CD8-positive, alpha-beta T cell (primary cell): ENCODE measurements at regions of chr6 and their contacts with region 1.

Region 1: DNA sequence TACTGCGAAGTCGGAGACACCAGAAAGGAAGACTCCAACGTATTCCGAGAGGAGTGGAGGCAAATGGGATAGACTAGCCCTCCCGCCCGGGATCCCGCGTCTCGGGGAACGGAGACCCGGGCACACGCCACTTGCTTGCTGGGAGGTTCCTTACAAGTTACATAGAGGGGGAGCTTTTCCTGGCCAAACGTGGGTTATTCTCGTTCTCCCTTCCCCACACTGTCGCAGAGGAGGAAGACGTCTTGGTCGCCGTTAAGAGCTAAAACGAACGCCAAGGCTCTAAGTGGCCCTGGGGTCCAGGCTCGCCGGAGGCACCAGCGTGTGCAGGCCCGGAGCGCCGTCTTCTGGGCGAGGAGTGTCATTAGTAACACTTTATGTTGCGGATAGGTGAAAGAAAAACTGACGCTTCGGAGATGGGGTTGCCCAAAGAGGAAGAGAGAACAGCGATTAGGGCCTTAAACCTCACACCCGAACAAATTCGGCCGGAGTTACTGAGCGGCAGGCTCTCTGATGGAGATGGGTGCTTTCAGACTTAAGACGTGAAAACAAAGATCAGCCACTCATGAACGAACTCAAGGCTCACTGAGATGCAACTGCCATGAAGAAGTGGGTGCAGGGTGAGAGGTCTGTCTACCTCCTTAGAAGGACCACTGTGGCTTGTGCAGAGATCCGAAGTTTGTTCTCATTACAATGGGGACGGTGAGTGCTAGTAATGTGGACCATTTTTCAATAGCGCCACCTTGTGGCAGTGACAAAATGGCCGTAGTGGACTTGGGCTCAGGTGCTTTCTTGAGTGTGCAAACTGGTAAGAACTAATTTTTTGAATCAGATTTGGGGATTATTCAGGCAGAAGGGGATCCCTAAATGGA is 11.7 kb upstream of the ZNF311 start:
- DNase-seq: peak; percentile 66 to 90 (median 86)
- ATAC-seq: peak; percentile 78
- H3K4me3 ChIP-seq: peak overlapping the region; percentile 52 to 62
- H3K4me3 Mint-ChIP-seq: peak overlapping the region; percentile 92
- H3K27ac ChIP-seq: no peak overlapping the region
- H3K27ac Mint-ChIP-seq: peak overlapping the region; percentile 87
- H3K4me1 ChIP-seq: peaks cover 5% of the 10 kb centered on the region
- H3K4me1 Mint-ChIP-seq: peaks cover 19% of the 10 kb centered on the region
- H3K27me3 ChIP-seq: peaks cover 0 to 11% of the 10 kb centered on the region in 2 experiments
- H3K27me3 Mint-ChIP-seq: peaks cover 21% of the 10 kb centered on the region
- CTCF ChIP-seq: peak; percentile 79

Region 2: DNA sequence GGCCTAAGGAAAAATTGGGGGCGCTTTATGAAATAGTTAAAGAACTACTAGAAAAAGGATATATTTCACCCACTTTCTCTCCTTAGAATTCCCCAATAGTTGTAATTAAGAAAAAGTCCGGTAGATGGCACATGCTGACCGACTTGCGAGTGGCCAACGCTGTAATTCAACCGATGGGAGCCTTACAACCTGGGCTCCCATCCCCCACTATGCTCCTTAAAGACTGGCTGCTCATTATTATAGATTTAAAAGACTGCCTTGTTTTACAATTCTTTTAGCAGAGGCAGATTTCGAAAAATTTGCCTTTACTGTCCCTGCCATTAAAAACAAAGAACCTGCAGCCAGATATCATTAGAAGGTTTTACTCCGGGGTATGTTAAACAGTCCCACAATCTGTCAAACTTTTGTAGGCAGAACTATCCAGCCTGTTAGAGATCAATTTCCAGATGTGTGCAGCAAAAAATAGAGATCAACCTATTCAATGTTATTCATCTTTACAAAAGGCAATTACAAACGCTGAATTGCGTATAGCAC is 1827.8 kb before region 1 on chr6:
- CTCF ChIA-PET with region 1: no interaction called
- POLR2A ChIA-PET with region 1: no interaction called
- intact Hi-C with region 1: loop called in 1 of 2 experiments (anchors 10 kb)
- DNase-seq: peak in 8 of 9 experiments; percentile 24 to 86 (median 50)
- ATAC-seq: peak; percentile 77
- H3K4me3 ChIP-seq: peak overlapping the region; percentile 58 to 62
- H3K4me3 Mint-ChIP-seq: peak overlapping the region; percentile 87
- H3K27ac ChIP-seq: peak overlapping the region in 1 of 2 experiments; percentile 33
- H3K27ac Mint-ChIP-seq: no peak overlapping the region
- H3K4me1 ChIP-seq: peaks cover 4% of the 10 kb centered on the region
- H3K4me1 Mint-ChIP-seq: peaks cover 10% of the 10 kb centered on the region
- H3K27me3 ChIP-seq: no peaks in the 10 kb centered on the region
- H3K27me3 Mint-ChIP-seq: no peaks in the 10 kb centered on the region
- CTCF ChIP-seq: peak; percentile 66

Region 3: DNA sequence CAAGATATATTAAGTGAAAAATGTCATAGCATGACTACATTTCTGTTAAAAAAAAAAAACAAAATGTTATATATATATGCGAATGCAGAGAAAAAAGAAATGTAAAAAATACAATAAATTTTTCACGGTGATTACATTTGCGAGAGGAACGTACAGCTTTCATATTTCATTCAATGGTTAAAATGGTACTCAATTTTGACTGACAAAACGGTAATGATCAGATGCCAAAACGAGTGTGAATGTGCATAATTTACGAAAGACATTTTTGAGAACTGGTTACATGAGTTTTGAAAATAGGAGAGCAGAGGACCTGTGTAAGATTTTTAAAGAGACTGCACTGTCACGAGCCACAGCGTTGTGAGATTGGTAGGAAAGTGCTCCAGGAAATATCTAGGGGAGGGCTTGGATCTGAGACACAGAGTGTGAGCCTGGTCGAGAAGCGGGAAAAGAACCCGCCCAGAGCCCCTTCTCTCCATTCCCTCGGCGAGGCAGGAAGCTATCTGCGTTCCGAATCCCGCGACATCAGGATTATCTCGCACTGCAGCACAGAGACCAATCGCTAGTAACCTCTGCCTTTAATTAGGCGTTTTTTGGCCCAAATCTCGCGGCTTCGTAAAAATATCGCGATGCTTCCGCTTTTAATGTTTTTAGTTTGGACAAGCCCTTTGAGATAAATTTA is 121.5 kb before region 1 on chr6:
- CTCF ChIA-PET with region 1: interaction called, 3 read pairs
- POLR2A ChIA-PET with region 1: interaction called, 5 read pairs
- intact Hi-C with region 1: loop called in 1 of 2 experiments (anchors 2 kb)
- DNase-seq: peak; percentile 83 to 97 (median 90)
- ATAC-seq: peak; percentile 68
- H3K4me3 ChIP-seq: peak overlapping the region; percentile 79 to 80
- H3K4me3 Mint-ChIP-seq: peak overlapping the region; percentile 98
- H3K27ac ChIP-seq: peak overlapping the region; percentile 95 to 98
- H3K27ac Mint-ChIP-seq: peak overlapping the region; percentile 99
- H3K4me1 ChIP-seq: peaks cover 8% of the 10 kb centered on the region
- H3K4me1 Mint-ChIP-seq: peaks cover 18% of the 10 kb centered on the region
- H3K27me3 ChIP-seq: no peaks in the 10 kb centered on the region
- H3K27me3 Mint-ChIP-seq: no peaks in the 10 kb centered on the region
- CTCF ChIP-seq: no peak

Region 4: DNA sequence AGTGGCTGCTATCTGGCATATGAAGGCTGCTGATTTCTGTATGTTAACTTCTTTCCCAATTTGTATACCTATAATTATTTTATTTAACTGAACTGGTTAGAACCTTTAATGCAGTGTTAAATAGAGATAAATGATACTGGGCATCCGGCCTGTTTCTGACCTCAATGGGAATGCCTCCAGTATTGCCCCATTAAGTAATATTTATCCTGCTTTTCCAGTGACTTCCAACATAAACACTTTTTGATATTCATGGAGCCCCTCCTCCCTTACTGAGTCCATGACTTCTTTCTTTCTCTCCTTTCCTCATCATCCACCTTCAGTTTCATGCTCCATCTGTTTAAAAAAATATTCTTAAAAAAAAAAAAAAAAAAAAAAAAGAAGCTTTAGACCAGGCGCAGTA is 101.9 kb before region 1 on chr6:
- CTCF ChIA-PET with region 1: no interaction called
- POLR2A ChIA-PET with region 1: no interaction called
- intact Hi-C with region 1: no loop called
- DNase-seq: no peak
- ATAC-seq: no peak
- H3K4me3 ChIP-seq: no peak overlapping the region
- H3K4me3 Mint-ChIP-seq: no peak overlapping the region
- H3K27ac ChIP-seq: no peak overlapping the region
- H3K27ac Mint-ChIP-seq: no peak overlapping the region
- H3K4me1 ChIP-seq: peaks cover 3% of the 10 kb centered on the region
- H3K4me1 Mint-ChIP-seq: peaks cover 17% of the 10 kb centered on the region
- H3K27me3 ChIP-seq: no peaks in the 10 kb centered on the region
- H3K27me3 Mint-ChIP-seq: no peaks in the 10 kb centered on the region
- CTCF ChIP-seq: no peak

Region 5: GRCh38 chr6:28940858-28941680 is 75.7 kb before region 1 on chr6:
- CTCF ChIA-PET with region 1: interaction called, 6 read pairs
- POLR2A ChIA-PET with region 1: no interaction called
- intact Hi-C with region 1: loop called (anchors 2 kb)
- DNase-seq: peak in 8 of 9 experiments; percentile 58 to 92 (median 70)
- ATAC-seq: peak; percentile 70
- H3K4me3 ChIP-seq: peak overlapping the region; percentile 66 to 81
- H3K4me3 Mint-ChIP-seq: peak overlapping the region; percentile 91
- H3K27ac ChIP-seq: peak overlapping the region; percentile 70 to 79
- H3K27ac Mint-ChIP-seq: peak overlapping the region; percentile 96
- H3K4me1 ChIP-seq: peaks cover 40% of the 10 kb centered on the region
- H3K4me1 Mint-ChIP-seq: peaks cover 46% of the 10 kb centered on the region
- H3K27me3 ChIP-seq: no peaks in the 10 kb centered on the region
- H3K27me3 Mint-ChIP-seq: no peaks in the 10 kb centered on the region
- CTCF ChIP-seq: no peak

Region 6: GRCh38 chr6:28988536-28989311 is 28.1 kb before region 1 on chr6:
- CTCF ChIA-PET with region 1: interaction called, 15 read pairs
- POLR2A ChIA-PET with region 1: interaction called, 3 read pairs
- intact Hi-C with region 1: loop called in 1 of 2 experiments (anchors 2 kb)
- DNase-seq: peak; percentile 54 to 87 (median 77)
- ATAC-seq: peak; percentile 90
- H3K4me3 ChIP-seq: peak overlapping the region; percentile 18 to 47
- H3K4me3 Mint-ChIP-seq: peak overlapping the region; percentile 77
- H3K27ac ChIP-seq: no peak overlapping the region
- H3K27ac Mint-ChIP-seq: no peak overlapping the region
- H3K4me1 ChIP-seq: peaks cover 12% of the 10 kb centered on the region
- H3K4me1 Mint-ChIP-seq: peaks cover 29% of the 10 kb centered on the region
- H3K27me3 ChIP-seq: no peaks in the 10 kb centered on the region
- H3K27me3 Mint-ChIP-seq: peaks cover 27% of the 10 kb centered on the region
- CTCF ChIP-seq: peak; percentile 64

Region 7: GRCh38 chr6:29005183-29005885 is 11.5 kb before region 1 on chr6 and contains the start of gene ZNF311:
- CTCF ChIA-PET with region 1: interaction called, 4 read pairs
- POLR2A ChIA-PET with region 1: no interaction called
- intact Hi-C with region 1: loop called in 1 of 2 experiments (anchors 1 kb)
- DNase-seq: peak in 3 of 9 experiments; percentile 19 to 63 (median 45)
- ATAC-seq: peak; percentile 61
- H3K4me3 ChIP-seq: peak within 1 kb of the TSS; percentile 43 to 45
- H3K4me3 Mint-ChIP-seq: peak within 1 kb of the TSS; percentile 84
- H3K27ac ChIP-seq: no peak within 1 kb of the TSS
- H3K27ac Mint-ChIP-seq: peak within 1 kb of the TSS; percentile 53
- H3K4me1 ChIP-seq: peaks cover 5% of the 10 kb centered on the region
- H3K4me1 Mint-ChIP-seq: peaks cover 12% of the 10 kb centered on the region
- H3K27me3 ChIP-seq: peaks cover 0 to 3% of the 10 kb centered on the region in 2 experiments
- H3K27me3 Mint-ChIP-seq: peaks cover 22% of the 10 kb centered on the region
- CTCF ChIP-seq: no peak
- total RNA-seq, gene ZNF311: not detected

Region 8: GRCh38 chr6:29797135-29797534 is 780.3 kb after region 1 on chr6:
- CTCF ChIA-PET with region 1: no interaction called
- POLR2A ChIA-PET with region 1: no interaction called
- intact Hi-C with region 1: no loop called
- DNase-seq: no peak
- ATAC-seq: no peak
- H3K4me3 ChIP-seq: no peak overlapping the region
- H3K4me3 Mint-ChIP-seq: no peak overlapping the region
- H3K27ac ChIP-seq: no peak overlapping the region
- H3K27ac Mint-ChIP-seq: no peak overlapping the region
- H3K4me1 ChIP-seq: peaks cover 5% of the 10 kb centered on the region
- H3K4me1 Mint-ChIP-seq: peaks cover 8% of the 10 kb centered on the region
- H3K27me3 ChIP-seq: peaks cover 0 to 6% of the 10 kb centered on the region in 2 experiments
- H3K27me3 Mint-ChIP-seq: peaks cover 31% of the 10 kb centered on the region
- CTCF ChIP-seq: no peak